Activated naive CD8-positive, alpha-beta T cell treated with anti-CD3 and anti-CD28 coated beads, Interleukin-2, amount 10 ng/mL, durations not matched to agents 7 days and 5 days (primary cell): ENCODE measurements at regions of chrX and their contacts with region 1.

Region 1: GRCh38 chrX:24479924-24480323 is 14.8 kb downstream of the PDK3 start:
- DNase-seq: peak; percentile 40
- ATAC-seq: peak; percentile 97
- H3K4me3 Mint-ChIP-seq: peak overlapping the region; percentile 81
- H3K27ac Mint-ChIP-seq: peak overlapping the region; percentile 95
- H3K4me1 Mint-ChIP-seq: peaks cover 34% of the 10 kb centered on the region
- H3K27me3 Mint-ChIP-seq: no peaks in the 10 kb centered on the region

Region 2: DNA sequence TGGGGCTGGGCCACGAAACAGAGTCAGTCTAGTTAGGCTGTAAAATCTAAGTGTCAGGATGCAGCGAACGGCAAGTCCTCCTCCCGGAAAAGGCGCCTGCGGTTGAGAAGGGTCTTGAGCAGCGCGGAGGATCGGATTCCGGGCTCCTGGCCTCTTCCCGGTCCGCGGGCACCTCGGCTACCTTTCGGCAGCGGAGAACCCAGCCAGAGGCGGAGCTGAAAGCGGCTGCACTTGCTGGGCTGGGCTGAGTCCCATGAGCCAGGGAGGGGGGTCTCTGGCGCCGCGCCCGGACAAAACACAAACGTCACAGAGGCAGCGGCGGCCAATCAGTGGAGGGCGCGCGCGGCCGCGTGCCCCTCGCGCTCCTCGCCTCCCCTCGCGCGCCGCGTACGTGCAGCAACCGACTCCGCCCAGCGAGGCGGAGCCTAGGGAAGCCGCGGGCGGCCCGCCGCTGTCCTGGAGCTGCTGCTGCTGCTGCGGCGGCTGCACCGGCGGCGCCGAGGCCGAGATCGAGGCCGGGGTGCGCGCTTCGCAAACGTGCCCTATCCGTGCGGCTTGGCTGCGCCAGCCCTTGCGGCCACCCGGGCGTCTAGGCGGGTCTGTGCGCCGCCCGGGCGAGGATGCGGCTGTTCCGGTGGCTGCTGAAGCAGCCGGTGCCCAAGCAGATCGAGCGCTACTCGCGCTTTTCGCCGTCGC is 14.9 kb before region 1 on chrX and contains the start of gene PDK3:
- POLR2A ChIA-PET with region 1: interaction called, 46 read pairs
- DNase-seq: peak; percentile 87
- ATAC-seq: peak; percentile 89
- H3K4me3 Mint-ChIP-seq: peak within 1 kb of the TSS; percentile 86
- H3K27ac Mint-ChIP-seq: peak within 1 kb of the TSS; percentile 91
- H3K4me1 Mint-ChIP-seq: peaks cover 26% of the 10 kb centered on the region
- H3K27me3 Mint-ChIP-seq: no peaks in the 10 kb centered on the region
- total RNA-seq, gene PDK3: 32.1 to 32.4 TPM

Region 3: GRCh38 chrX:24515447-24515846 is 35.5 kb after region 1 on chrX:
- POLR2A ChIA-PET with region 1: no interaction called
- DNase-seq: no peak
- ATAC-seq: no peak
- H3K4me3 Mint-ChIP-seq: no peak overlapping the region
- H3K27ac Mint-ChIP-seq: no peak overlapping the region
- H3K4me1 Mint-ChIP-seq: peaks cover 4% of the 10 kb centered on the region
- H3K27me3 Mint-ChIP-seq: no peaks in the 10 kb centered on the region